ENCODE measurements at regions of chr17 and their contacts with region 1.

Region 1: DNA sequence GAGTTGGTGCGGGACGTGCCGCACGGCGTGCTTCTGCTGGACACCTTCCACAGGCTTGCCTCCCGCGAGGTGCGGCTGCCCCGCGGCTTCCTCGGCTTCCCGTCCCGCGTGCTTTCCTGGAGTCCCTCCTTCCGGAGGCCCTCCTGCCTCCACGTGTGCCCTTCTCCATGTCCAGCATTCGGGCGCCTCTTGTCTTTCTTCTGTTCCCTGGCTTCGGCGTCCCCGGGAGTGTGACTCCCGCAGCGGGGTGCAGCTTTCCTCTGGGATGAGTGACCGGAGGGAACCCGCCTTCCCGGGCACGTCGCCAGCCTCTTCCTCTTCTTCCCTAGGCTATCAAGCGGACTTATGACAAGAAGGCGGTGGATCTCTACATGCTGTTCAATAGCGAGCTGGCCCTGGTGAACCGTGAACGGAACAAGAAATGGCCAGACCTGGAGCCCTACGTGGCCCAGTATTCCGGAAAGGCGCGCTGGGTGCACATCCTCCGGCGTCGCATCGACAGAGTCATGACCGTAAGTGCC is 23.0 kb downstream of the DNAH2 start:
- DNase-seq: no peak
- ATAC-seq: no peak
- H3K4me3 ChIP-seq: no peak overlapping the region
- H3K27ac ChIP-seq: no peak overlapping the region
- H3K4me1 ChIP-seq: peaks cover 5% of the 10 kb centered on the region; the same call in 1 of the 2 replicates
- H3K27me3 ChIP-seq: no peaks in the 10 kb centered on the region
- CTCF ChIP-seq: no peak

Region 2: DNA sequence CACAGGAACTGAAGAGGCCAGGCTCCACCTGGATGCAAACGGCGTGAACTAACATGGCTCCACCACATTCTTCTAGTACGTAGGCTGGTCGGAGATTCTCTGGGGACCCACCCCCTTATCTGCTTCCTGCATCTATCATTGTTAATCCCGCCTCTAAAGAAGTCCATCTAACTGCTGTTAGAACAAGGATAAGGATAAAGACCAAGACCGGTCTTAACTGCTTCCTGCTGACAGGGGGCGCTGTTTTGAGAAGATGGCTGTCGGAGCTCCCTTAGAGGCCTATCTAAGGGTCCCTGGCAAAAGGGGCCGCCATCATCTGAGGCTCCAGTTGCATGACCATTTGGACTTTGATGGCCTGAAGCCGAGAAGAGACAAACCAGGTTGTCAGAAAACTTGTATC is 217.5 kb before region 1 on chr17:
- CTCF ChIA-PET with region 1: no interaction called
- POLR2A ChIA-PET with region 1: no interaction called
- intact Hi-C with region 1: no loop called
- DNase-seq: peak; percentile 3
- ATAC-seq: no peak
- H3K4me3 ChIP-seq: no peak overlapping the region
- H3K27ac ChIP-seq: no peak overlapping the region
- H3K4me1 ChIP-seq: no peaks in the 10 kb centered on the region
- H3K27me3 ChIP-seq: no peaks in the 10 kb centered on the region
- CTCF ChIP-seq: peak; percentile 47; the same call in 1 of the 2 replicates

Region 3: GRCh38 chr17:7844292-7845154 is 104.0 kb after region 1 on chr17:
- CTCF ChIA-PET with region 1: no interaction called
- POLR2A ChIA-PET with region 1: no interaction called
- intact Hi-C with region 1: loop called (anchors 5 kb)
- DNase-seq: peak; percentile 88
- ATAC-seq: peak; percentile 67
- H3K4me3 ChIP-seq: peak overlapping the region; percentile 84
- H3K27ac ChIP-seq: peak overlapping the region; percentile 98
- H3K4me1 ChIP-seq: peaks cover 19% of the 10 kb centered on the region
- H3K27me3 ChIP-seq: no peaks in the 10 kb centered on the region
- CTCF ChIP-seq: no peak

Measured in PC-3 (cell line).